SK-N-SH (cell line): ENCODE measurements at regions of chr13 and their contacts with region 1.

Region 1: DNA sequence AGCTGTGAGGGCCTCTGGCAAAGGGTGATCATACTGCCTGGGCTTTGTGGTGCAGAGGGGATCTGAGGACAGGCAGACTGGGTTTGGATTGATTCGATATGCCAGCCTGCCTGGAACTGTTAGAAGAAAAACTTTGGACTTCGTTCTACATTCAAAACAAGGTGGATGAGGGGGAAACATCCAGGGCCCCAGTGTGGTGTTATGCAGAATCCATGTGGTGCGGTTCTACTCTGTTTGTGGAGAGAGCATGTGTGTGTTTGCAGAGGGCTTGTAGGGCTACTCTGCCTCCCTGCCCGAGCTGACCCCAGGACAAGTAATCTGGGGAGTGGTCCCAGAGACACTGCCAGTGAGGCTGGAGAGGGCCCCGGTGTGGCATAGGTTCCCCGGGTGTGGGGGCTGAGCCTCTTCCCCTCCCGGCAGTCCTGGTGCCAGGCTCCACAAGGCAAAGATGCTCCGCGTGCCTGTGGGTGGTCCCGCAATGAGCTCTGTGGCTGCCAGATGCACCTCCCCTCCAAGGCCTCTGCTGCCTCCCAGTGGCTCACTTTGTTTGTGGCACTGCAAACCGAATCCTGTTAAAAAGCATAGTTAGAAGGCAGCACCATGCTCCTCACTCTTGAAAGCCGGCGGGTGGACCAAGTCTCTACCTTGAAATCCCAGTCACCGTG is 22.3 kb upstream of the TFDP1 start:
- DNase-seq: peak; percentile 90
- H3K4me3 ChIP-seq: peak overlapping the region in 1 of 2 experiments; percentile 20; a peak in 1 of 4 replicates
- H3K27ac ChIP-seq: no peak overlapping the region
- H3K4me1 ChIP-seq: peaks cover 0 to 8% of the 10 kb centered on the region in 2 experiments; a peak in 1 of 4 replicates
- H3K27me3 ChIP-seq: no peaks in the 10 kb centered on the region
- CTCF ChIP-seq: peak; percentile 74
- EP300 ChIP-seq: no peak
- RAD21 ChIP-seq: peak; percentile 96

Region 2: GRCh38 chr13:113305208-113305607 is 257.0 kb before region 1 on chr13:
- CTCF ChIA-PET with region 1: no interaction called
- POLR2A ChIA-PET with region 1: no interaction called
- DNase-seq: no peak
- H3K4me3 ChIP-seq: no peak overlapping the region
- H3K27ac ChIP-seq: no peak overlapping the region
- H3K4me1 ChIP-seq: no peaks in the 10 kb centered on the region
- H3K27me3 ChIP-seq: no peaks in the 10 kb centered on the region
- CTCF ChIP-seq: no peak
- EP300 ChIP-seq: no peak
- RAD21 ChIP-seq: no peak

Region 3: DNA sequence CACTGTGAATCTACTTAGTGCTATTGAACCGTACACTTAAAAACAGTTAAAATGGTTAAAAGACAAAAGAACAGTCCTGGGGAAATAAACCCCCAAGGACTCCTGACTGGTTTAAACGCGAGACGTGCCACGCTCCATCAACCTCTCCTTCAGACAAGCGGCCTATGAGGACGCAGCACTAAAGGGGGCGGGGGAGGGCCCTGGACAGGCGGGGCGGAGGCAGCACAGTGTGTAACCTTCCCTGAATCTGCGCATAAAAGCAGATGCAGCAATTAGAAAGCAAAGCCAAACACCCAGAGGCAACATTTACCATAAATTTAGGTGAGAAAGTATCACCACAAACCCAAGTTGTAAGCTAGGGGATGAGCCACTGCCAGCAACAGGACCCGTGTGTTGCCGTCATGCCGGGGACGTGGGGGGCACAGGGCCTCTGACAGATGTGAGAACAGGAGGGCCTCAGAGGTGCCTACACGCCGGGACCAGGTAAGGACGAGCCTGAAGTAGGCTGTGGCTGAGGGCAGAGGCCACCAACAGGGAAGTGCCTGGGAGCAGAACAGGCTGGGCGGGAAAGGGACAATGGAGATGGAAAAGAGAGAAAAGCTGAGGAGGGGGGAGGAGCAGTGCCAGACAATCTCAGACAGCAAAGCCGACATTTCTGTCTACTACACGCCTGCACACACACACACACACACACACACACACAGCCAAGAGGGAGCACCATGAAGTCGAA is 93.6 kb before region 1 on chr13:
- CTCF ChIA-PET with region 1: interaction called, 28 read pairs
- POLR2A ChIA-PET with region 1: no interaction called
- DNase-seq: no peak
- H3K4me3 ChIP-seq: no peak overlapping the region
- H3K27ac ChIP-seq: no peak overlapping the region
- H3K4me1 ChIP-seq: no peaks in the 10 kb centered on the region
- H3K27me3 ChIP-seq: no peaks in the 10 kb centered on the region
- CTCF ChIP-seq: no peak
- EP300 ChIP-seq: no peak
- RAD21 ChIP-seq: no peak

Region 4: GRCh38 chr13:113483504-113484293 is 78.5 kb before region 1 on chr13:
- CTCF ChIA-PET with region 1: interaction called, 34 read pairs
- POLR2A ChIA-PET with region 1: no interaction called
- DNase-seq: no peak
- H3K4me3 ChIP-seq: no peak overlapping the region
- H3K27ac ChIP-seq: no peak overlapping the region
- H3K4me1 ChIP-seq: peaks cover 4 to 35% of the 10 kb centered on the region in 2 experiments; a peak in 3 of 4 replicates
- H3K27me3 ChIP-seq: no peaks in the 10 kb centered on the region
- CTCF ChIP-seq: no peak
- EP300 ChIP-seq: no peak
- RAD21 ChIP-seq: no peak

Region 5: DNA sequence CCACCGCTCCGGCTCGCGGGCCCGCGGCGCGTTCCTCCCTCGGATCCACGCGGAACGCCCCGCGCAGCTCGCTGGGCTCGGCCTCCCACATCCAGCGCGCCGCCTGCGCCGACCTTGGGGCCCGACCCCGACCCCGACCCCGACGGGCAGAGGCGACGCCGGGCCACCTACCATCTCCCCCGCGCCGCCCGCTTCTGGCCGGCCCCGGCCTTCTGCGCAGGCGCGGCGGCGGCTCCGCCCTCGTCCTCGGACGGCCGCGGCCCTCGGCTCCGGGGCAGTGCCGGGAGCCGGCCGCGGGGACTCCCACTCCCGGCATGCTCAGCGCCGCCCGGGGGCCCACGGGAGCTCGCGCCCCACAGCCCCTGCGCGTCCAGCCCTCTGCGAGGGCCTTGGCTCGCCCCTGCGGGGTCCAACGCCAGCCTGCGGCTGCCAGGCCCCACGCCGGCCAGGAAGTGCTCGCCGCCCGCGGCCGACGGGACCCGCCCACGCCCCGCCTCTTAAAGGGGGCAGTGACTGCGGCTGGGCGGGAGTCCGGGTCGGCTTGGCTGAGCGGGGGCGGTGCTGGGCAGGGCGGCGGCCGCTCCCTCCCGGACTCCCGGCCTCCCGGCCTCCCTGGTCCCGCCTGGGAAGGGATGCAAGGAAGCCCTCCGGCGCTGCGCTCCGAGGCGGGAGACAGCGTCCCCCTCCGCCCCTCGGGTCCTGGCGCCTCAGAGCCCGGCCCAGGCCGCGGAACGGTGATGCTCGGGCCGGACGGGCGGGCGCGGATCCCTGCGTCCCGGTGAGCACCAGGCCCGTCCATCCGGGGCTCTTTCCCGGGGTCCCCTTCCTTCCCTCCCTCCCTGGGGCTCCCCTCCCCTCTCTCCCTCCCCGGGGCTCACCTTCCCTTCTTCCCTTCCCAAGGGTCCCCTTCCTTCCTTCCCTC is 71.5 kb before region 1 on chr13 and contains the start of gene DCUN1D2:
- CTCF ChIA-PET with region 1: interaction called, 34 read pairs
- POLR2A ChIA-PET with region 1: no interaction called
- DNase-seq: peak; percentile 99
- H3K4me3 ChIP-seq: peak within 1 kb of the TSS; percentile 65 to 83
- H3K27ac ChIP-seq: peak within 1 kb of the TSS; percentile 84 to 87
- H3K4me1 ChIP-seq: peaks cover 24 to 49% of the 10 kb centered on the region in 2 experiments; a peak in 3 of 4 replicates
- H3K27me3 ChIP-seq: no peaks in the 10 kb centered on the region
- CTCF ChIP-seq: no peak
- EP300 ChIP-seq: 0 out of 4 replicates have a peak, but pooled peaks of 1 of the 2 experiments have one; percentile 8
- RAD21 ChIP-seq: no peak
- polyA plus RNA-seq, gene DCUN1D2: 11.0 and 13.0 TPM in 2 replicates

Region 6: GRCh38 chr13:113532156-113532806 is 29.9 kb before region 1 on chr13:
- CTCF ChIA-PET with region 1: interaction called, 13 read pairs
- POLR2A ChIA-PET with region 1: no interaction called
- DNase-seq: no peak
- H3K4me3 ChIP-seq: no peak overlapping the region
- H3K27ac ChIP-seq: peak overlapping the region in 1 of 2 experiments; percentile 51; a peak in 1 of 4 replicates
- H3K4me1 ChIP-seq: peaks cover 0 to 17% of the 10 kb centered on the region in 2 experiments; a peak in 2 of 4 replicates
- H3K27me3 ChIP-seq: no peaks in the 10 kb centered on the region
- CTCF ChIP-seq: no peak
- EP300 ChIP-seq: no peak
- RAD21 ChIP-seq: no peak

Region 7: GRCh38 chr13:113539822-113540221 is 22.4 kb before region 1 on chr13:
- CTCF ChIA-PET with region 1: interaction called, 39 read pairs
- POLR2A ChIA-PET with region 1: interaction called, 3 read pairs
- DNase-seq: no peak
- H3K4me3 ChIP-seq: no peak overlapping the region
- H3K27ac ChIP-seq: no peak overlapping the region
- H3K4me1 ChIP-seq: peaks cover 0 to 39% of the 10 kb centered on the region in 2 experiments; a peak in 2 of 4 replicates
- H3K27me3 ChIP-seq: no peaks in the 10 kb centered on the region
- CTCF ChIP-seq: no peak
- EP300 ChIP-seq: no peak
- RAD21 ChIP-seq: no peak

Region 8: DNA sequence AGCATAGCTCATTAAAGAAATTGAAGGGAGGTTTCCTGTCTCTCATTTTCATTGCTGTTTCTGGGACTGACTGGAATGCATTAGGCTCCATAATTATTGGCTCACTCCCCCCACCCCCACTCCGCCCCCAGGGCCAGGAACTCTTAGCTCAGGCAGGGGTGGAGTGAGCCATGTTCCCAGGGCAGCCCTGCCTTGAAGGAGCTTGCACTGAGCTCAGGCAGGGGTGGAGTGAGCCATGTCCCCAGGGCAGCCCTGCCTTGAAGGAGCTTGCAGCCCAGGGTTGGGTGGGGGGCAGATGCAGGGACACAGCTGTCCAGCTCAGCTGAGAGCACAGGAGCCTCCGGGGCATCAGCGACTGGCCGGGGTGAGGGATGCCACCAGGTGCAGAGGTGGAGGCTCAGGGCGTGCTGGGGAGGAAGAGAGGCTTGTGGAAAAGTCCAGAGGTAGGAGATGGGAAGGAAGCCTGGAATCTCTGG is 16.7 kb before region 1 on chr13:
- CTCF ChIA-PET with region 1: interaction called, 39 read pairs
- POLR2A ChIA-PET with region 1: interaction called, 3 read pairs
- DNase-seq: peak; percentile 59
- H3K4me3 ChIP-seq: no peak overlapping the region
- H3K27ac ChIP-seq: peak overlapping the region in 1 of 2 experiments; percentile 99; a peak in 2 of 4 replicates
- H3K4me1 ChIP-seq: peaks cover 0 to 72% of the 10 kb centered on the region in 2 experiments; a peak in 2 of 4 replicates
- H3K27me3 ChIP-seq: no peaks in the 10 kb centered on the region
- CTCF ChIP-seq: no peak
- EP300 ChIP-seq: no peak
- RAD21 ChIP-seq: no peak

Region 9: DNA sequence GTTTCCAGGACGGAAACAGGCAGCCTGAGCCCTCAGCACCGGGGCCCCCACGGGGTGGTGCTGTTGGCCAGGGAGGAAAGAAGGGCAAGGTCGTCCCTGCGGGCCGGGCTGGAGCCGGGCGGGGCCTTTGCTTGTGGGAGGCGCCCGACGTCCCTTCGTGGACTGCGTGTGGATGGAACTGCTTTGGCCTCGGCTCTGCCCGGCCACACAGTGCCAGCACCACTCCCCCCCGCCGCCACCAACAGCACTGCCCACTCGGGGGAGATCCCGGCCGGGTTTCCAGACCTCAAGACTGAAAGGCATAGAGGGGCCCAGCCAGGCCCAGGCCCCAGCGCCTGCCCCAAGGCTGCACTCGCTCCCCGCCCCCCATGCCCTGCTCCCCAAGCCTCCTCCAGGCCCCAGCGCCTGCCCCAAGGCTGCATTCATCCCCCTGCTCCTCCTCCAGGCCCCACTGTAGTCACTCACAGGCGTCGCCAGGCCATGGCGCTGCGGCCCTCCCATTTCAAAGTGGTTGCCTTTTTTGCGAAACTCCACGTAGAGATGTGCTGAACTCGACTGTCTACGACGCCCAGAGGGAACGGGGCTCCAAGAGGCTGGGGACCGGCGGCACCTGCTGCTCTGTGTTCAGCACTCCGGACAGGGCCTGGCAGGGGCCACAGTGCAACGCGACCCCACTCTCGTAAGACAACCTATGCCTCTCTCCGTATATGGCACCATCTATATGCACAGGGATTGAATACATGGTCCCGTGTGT is 389.2 kb after region 1 on chr13:
- CTCF ChIA-PET with region 1: no interaction called
- POLR2A ChIA-PET with region 1: no interaction called
- DNase-seq: peak; percentile 66
- H3K4me3 ChIP-seq: no peak overlapping the region
- H3K27ac ChIP-seq: no peak overlapping the region
- H3K4me1 ChIP-seq: peaks cover 0 to 6% of the 10 kb centered on the region in 2 experiments; a peak in 1 of 4 replicates
- H3K27me3 ChIP-seq: no peaks in the 10 kb centered on the region
- CTCF ChIP-seq: no peak
- EP300 ChIP-seq: no peak
- RAD21 ChIP-seq: peak; percentile 41